ENCODE measurements at regions of chr2 and their contacts with region 1.

Region 1: GRCh38 chr2:12716282-12717190 is at the start of gene TRIB2:
- DNase-seq: peak; percentile 88 to 96 (median 94)
- ATAC-seq: peak; percentile 78
- H3K4me3 ChIP-seq: peak within 1 kb of the TSS; percentile 64
- H3K27ac ChIP-seq: peak within 1 kb of the TSS; percentile 86
- H3K4me1 ChIP-seq: peaks cover 13 to 30% of the 10 kb centered on the region in 2 experiments; a peak in 4 of 5 replicates
- H3K27me3 ChIP-seq: no peaks in the 10 kb centered on the region
- CTCF ChIP-seq: peak; percentile 19 to 46 (median 35); a peak in 4 of 6 replicates
- EP300 ChIP-seq: no peak
- POLR2A ChIP-seq: peak; percentile 73
- RAD21 ChIP-seq: no peak; a peak in 2 of 4 replicates
- polyA plus RNA-seq, gene TRIB2: 9.0 to 12.2 TPM

Region 2: GRCh38 chr2:11967946-11968465 is 748.5 kb before region 1 on chr2:
- CTCF ChIA-PET with region 1: no interaction called
- POLR2A ChIA-PET with region 1: no interaction called
- in situ Hi-C with region 1: no loop called
- intact Hi-C with region 1: loop called (anchors 5 kb)
- DNase-seq: peak; percentile 86 to 99 (median 92)
- ATAC-seq: peak; percentile 99
- H3K4me3 ChIP-seq: no peak overlapping the region
- H3K27ac ChIP-seq: peak overlapping the region; percentile 62
- H3K4me1 ChIP-seq: peaks cover 4 to 25% of the 10 kb centered on the region in 2 experiments; a peak in 4 of 5 replicates
- H3K27me3 ChIP-seq: no peaks in the 10 kb centered on the region
- CTCF ChIP-seq: no peak; a peak in 1 of 6 replicates
- EP300 ChIP-seq: peak; percentile 99
- POLR2A ChIP-seq: no peak
- RAD21 ChIP-seq: peak; percentile 44 to 55

Region 3: GRCh38 chr2:12277241-12278034 is 439.1 kb before region 1 on chr2:
- CTCF ChIA-PET with region 1: no interaction called
- POLR2A ChIA-PET with region 1: interaction called, 8 read pairs
- in situ Hi-C with region 1: no loop called
- intact Hi-C with region 1: loop called (anchors 5 kb)
- DNase-seq: peak; percentile 81 to 96 (median 87)
- ATAC-seq: peak; percentile 78
- H3K4me3 ChIP-seq: peak overlapping the region; percentile 39
- H3K27ac ChIP-seq: peak overlapping the region; percentile 90
- H3K4me1 ChIP-seq: peaks cover 0 to 6% of the 10 kb centered on the region in 2 experiments; a peak in 2 of 5 replicates
- H3K27me3 ChIP-seq: no peaks in the 10 kb centered on the region
- CTCF ChIP-seq: no peak
- EP300 ChIP-seq: peak; percentile 95
- POLR2A ChIP-seq: peak; percentile 85
- RAD21 ChIP-seq: peak in 1 of 2 experiments; percentile 29; a peak in 2 of 4 replicates

Region 4: GRCh38 chr2:12493031-12493513 is 223.5 kb before region 1 on chr2:
- CTCF ChIA-PET with region 1: no interaction called
- POLR2A ChIA-PET with region 1: interaction called, 3 read pairs
- in situ Hi-C with region 1: no loop called
- intact Hi-C with region 1: loop called (anchors 2 kb)
- DNase-seq: peak; percentile 67 to 94 (median 78)
- ATAC-seq: peak; percentile 96
- H3K4me3 ChIP-seq: no peak overlapping the region
- H3K27ac ChIP-seq: peak overlapping the region; percentile 58; the same call in 2 of the 3 replicates
- H3K4me1 ChIP-seq: peaks cover 6 to 10% of the 10 kb centered on the region in 2 experiments; a peak in 3 of 5 replicates
- H3K27me3 ChIP-seq: no peaks in the 10 kb centered on the region
- CTCF ChIP-seq: no peak
- EP300 ChIP-seq: 0 out of 2 replicates have a peak, but pooled peaks have one; percentile 24
- POLR2A ChIP-seq: peak; percentile 63
- RAD21 ChIP-seq: peak in 1 of 2 experiments; percentile 15; a peak in 2 of 4 replicates

Region 5: DNA sequence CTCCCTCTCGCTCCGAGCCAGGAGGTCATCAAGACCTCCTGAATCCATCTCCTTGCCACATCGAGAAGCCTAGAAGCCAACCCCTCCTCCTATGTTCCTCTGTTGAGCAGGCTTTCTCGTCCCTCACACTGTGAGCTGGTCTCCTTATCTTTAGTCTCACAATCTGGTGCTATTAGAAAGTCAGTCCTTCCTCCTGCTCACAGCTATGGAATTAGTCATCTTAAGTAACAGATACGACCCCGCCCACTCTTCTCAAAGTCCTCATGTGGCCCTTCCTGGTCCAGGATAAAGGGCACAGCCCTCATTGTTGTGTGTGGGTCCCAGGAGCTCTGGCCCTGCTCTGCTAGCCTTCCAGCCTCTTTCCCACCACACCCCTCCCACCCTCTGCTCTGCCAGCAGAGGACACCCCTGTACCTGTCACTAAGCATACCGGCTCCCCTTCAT is 41.2 kb before region 1 on chr2:
- CTCF ChIA-PET with region 1: no interaction called
- POLR2A ChIA-PET with region 1: interaction called, 3 read pairs
- in situ Hi-C with region 1: no loop called
- intact Hi-C with region 1: loop called (anchors 5 kb)
- DNase-seq: peak; percentile 38 to 84 (median 56)
- ATAC-seq: peak; percentile 95
- H3K4me3 ChIP-seq: no peak overlapping the region
- H3K27ac ChIP-seq: peak overlapping the region; percentile 51; the same call in 2 of the 3 replicates
- H3K4me1 ChIP-seq: peaks cover 10 to 18% of the 10 kb centered on the region in 2 experiments
- H3K27me3 ChIP-seq: no peaks in the 10 kb centered on the region
- CTCF ChIP-seq: no peak
- EP300 ChIP-seq: 0 out of 2 replicates have a peak, but pooled peaks have one; percentile 21
- POLR2A ChIP-seq: no peak
- RAD21 ChIP-seq: peak in 1 of 2 experiments; percentile 24; a peak in 1 of 4 replicates

Region 6: GRCh38 chr2:13040043-13040442 is 323.5 kb after region 1 on chr2:
- CTCF ChIA-PET with region 1: no interaction called
- POLR2A ChIA-PET with region 1: no interaction called
- in situ Hi-C with region 1: no loop called
- intact Hi-C with region 1: no loop called
- DNase-seq: no peak
- ATAC-seq: no peak
- H3K4me3 ChIP-seq: no peak overlapping the region
- H3K27ac ChIP-seq: no peak overlapping the region
- H3K4me1 ChIP-seq: no peaks in the 10 kb centered on the region
- H3K27me3 ChIP-seq: peaks cover 0 to 12% of the 10 kb centered on the region in 2 experiments; a peak in 2 of 5 replicates
- CTCF ChIP-seq: no peak
- EP300 ChIP-seq: no peak
- POLR2A ChIP-seq: no peak
- RAD21 ChIP-seq: no peak